A673 (cell line): ENCODE measurements at regions of chr3 and their contacts with region 1.

Region 1: DNA sequence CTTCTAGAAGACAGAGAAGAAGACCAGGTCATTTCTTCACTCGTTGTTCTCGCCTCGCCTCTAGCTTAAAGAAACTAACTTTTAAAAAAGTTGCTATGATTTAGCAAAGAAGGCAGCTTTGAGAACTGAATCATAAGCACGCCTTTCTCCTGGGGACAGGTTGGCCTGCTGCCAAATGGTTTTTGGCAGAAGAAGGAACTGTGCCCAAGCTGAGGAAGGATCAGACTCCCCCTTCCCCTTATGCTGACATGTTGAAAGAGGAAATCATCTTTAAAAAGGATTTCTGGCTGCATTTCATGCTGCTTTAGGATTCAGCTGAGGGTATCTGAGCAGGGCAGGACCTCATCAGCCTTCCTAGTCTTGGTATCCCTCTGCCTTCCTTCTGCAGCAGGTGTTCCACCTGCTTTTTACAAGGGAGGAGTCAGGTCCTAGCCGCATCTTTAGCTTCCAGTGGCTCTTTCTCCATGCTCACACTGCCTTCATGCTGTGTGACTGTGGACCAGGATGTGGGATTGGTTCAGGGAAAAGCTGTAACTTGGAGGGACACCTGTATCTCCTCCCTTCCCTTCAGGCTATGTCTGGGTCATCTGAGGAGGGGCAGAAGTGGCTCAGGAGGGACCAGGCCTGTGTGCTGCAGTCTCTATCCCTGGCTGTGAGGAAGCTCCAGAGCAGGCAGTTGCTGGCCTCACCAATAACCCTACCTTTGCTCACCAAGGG is 34.1 kb upstream of the HACD2 start:
- DNase-seq: peak; percentile 81
- H3K4me3 ChIP-seq: no peak overlapping the region
- H3K27ac ChIP-seq: peak overlapping the region; percentile 15
- H3K4me1 ChIP-seq: peaks cover 13% of the 10 kb centered on the region
- H3K27me3 ChIP-seq: no peaks in the 10 kb centered on the region
- CTCF ChIP-seq: no peak

Region 2: GRCh38 chr3:122982216-122983185 is 636.4 kb before region 1 on chr3:
- CTCF ChIA-PET with region 1: no interaction called
- POLR2A ChIA-PET with region 1: interaction called, 20 read pairs
- intact Hi-C with region 1: no loop called
- DNase-seq: peak; percentile 92
- H3K4me3 ChIP-seq: no peak overlapping the region
- H3K27ac ChIP-seq: no peak overlapping the region
- H3K4me1 ChIP-seq: peaks cover 19% of the 10 kb centered on the region
- H3K27me3 ChIP-seq: peaks cover 63% of the 10 kb centered on the region
- CTCF ChIP-seq: no peak

Region 3: GRCh38 chr3:124229420-124229819 is 610.5 kb after region 1 on chr3:
- CTCF ChIA-PET with region 1: no interaction called
- POLR2A ChIA-PET with region 1: no interaction called
- intact Hi-C with region 1: no loop called
- DNase-seq: no peak
- H3K4me3 ChIP-seq: no peak overlapping the region
- H3K27ac ChIP-seq: no peak overlapping the region
- H3K4me1 ChIP-seq: no peaks in the 10 kb centered on the region
- H3K27me3 ChIP-seq: no peaks in the 10 kb centered on the region
- CTCF ChIP-seq: no peak